GM10248 (cell line): ENCODE measurements at regions of chr10 and their contacts with region 1.

Region 1: GRCh38 chr10:95793401-95794045 is 37.6 kb downstream of the ENTPD1 start:
- DNase-seq: no peak
- CTCF ChIP-seq: no peak

Region 2: GRCh38 chr10:95820363-95820762 is 26.8 kb after region 1 on chr10:
- CTCF ChIA-PET with region 1: interaction called, 11 read pairs
- POLR2A ChIA-PET with region 1: interaction called, 3 read pairs
- DNase-seq: peak; percentile 42
- CTCF ChIP-seq: peak; percentile 13